Head of caudate nucleus (tissue), 42 donors: ENCODE measurements at regions of chr17 and their contacts with region 1.

Region 1: DNA sequence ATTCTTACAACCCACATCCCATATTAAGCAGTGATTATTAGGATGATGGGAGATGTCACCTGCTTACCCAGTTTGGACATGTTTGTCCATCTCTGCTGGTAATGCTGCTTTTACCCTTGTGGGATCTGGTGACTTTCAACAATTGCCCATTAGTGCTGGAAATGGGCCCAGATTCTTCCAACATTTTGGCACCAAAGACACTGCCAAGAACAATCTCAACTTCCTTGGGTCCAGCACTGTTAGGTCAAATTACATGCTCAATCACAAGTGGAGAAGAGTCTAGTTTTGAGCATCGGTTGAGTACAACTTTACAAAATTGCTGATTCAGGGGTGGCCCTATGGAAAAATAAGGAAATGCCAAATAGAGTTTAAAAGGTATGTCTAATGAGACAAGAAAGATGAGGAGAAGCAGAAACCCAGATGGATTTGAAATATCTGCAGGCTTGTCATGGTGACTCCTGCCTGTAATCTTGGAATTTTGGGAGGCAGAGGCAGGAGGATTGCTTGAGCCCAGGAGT is 13.0 kb upstream of the ZFP3 start:
- DNase-seq: no peak

Region 2: GRCh38 chr17:4082136-4082924 is 983.0 kb before region 1 on chr17:
- intact Hi-C with region 1: no loop called
- DNase-seq: no peak

Region 3: DNA sequence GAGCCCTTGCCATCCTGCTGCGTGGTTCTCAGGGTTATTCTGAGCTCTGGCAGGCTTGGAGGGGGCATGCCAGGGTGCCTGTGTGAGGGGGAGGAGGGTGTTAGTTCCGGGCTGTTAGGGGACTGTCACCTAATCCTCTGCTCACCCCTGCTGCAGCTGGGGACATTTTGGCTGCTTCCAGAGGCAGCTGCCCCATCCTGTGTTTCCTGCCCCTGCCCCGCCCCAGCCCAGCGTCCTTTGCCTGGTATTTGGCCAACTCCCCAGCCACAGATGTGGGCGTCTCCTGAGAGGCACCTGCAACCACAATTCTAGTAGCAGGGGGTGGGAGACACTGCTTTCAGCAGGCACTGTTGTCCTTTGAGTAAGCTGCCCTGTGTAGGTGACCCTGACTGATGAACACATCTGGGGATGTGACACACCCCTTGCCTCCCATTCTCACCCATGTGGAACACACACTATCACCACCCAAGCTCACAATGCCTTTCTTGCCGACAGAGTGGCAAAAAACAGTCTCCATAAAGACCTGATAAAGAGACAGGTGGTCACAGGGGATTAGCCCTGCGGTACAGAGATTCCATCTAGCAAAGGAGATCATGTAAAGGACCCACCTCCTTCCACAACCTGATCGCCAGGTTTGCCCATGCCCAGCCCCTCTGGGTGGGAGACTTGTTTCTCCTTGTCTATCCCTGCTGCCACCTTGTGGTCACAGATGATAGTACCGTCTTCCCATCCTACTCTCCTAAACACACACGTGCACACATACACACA is 162.1 kb before region 1 on chr17 and contains the start of gene CHRNE:
- intact Hi-C with region 1: loop called (anchors 10 kb)
- DNase-seq: peak; percentile 29 to 95 (median 82)

Region 4: GRCh38 chr17:4986951-4987766 is 78.1 kb before region 1 on chr17 and contains the start of gene CAMTA2:
- intact Hi-C with region 1: loop called (anchors 10 kb)
- DNase-seq: peak; percentile 78 to 96 (median 93)

Region 5: DNA sequence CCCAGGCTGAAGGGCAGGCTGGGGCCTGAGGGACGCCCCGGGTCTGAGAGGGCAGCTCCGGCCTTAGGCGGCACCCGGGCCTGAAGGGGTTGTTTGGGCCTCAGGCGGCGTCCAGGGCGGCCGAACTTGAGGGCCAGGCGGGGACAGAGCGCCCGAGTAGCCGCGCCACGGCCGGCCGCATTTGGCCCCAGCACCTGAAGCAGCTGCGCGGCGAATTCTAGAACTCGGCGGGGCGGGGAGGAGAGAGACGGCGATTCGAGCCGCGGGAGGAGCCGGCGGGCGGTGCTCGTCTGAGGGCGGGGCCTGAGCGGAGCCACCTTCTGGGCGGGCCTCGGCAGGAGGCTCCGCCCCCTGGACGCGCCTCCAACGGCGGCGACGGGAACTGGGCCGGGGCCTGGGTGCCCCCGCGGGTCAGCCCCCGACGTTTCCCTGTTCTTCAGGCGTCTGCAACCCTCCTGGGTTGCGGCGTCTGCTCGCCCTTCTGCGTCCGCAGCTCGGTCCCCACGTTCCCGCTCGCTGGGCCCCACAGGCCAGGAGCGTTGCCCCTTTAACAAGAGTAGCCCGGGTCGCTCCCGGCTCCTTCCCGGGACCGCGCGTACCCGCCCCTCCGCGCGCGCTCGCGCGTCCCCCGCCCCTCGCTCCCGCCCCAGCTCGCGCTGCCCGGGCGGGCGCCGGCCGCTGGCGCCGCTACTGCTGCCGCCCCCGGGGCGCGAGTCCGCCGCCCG is 67.8 kb before region 1 on chr17 and contains the starts of genes INCA1 and KIF1C:
- intact Hi-C with region 1: no loop called
- DNase-seq: peak; percentile 85 to 99 (median 96)

Region 6: DNA sequence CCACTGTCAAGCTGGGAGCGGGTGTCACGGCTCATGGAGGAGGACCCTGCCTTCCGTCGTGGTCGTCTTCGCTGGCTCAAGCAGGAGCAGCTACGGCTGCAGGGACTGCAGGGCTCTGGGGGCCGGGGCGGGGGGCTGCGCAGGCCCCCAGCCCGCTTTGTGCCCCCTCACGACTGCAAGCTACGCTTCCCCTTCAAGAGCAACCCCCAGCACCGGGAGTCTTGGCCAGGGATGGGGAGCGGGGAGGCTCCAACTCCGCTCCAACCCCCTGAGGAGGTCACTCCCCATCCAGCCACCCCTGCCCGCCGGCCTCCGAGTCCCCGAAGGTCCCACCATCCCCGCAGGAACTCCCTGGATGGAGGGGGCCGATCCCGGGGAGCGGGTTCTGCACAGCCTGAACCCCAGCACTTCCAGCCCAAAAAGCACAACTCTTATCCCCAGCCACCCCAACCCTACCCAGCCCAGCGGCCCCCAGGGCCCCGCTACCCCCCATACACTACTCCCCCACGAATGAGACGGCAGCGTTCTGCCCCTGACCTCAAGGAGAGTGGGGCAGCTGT is 41.6 kb before region 1 on chr17:
- intact Hi-C with region 1: no loop called
- DNase-seq: no peak